Colonic mucosa (tissue), 4 donors: ENCODE measurements at regions of chr7 and their contacts with region 1.

Region 1: GRCh38 chr7:47968847-47969774 is 10.3 kb downstream of the HUS1 start:
- DNase-seq: peak; percentile 78
- H3K4me3 ChIP-seq: no peak overlapping the region
- H3K27ac ChIP-seq: peak overlapping the region; percentile 78
- H3K4me1 ChIP-seq: peaks cover 4% of the 10 kb centered on the region
- H3K27me3 ChIP-seq: no peaks in the 10 kb centered on the region
- CTCF ChIP-seq: peak; percentile 81

Region 2: DNA sequence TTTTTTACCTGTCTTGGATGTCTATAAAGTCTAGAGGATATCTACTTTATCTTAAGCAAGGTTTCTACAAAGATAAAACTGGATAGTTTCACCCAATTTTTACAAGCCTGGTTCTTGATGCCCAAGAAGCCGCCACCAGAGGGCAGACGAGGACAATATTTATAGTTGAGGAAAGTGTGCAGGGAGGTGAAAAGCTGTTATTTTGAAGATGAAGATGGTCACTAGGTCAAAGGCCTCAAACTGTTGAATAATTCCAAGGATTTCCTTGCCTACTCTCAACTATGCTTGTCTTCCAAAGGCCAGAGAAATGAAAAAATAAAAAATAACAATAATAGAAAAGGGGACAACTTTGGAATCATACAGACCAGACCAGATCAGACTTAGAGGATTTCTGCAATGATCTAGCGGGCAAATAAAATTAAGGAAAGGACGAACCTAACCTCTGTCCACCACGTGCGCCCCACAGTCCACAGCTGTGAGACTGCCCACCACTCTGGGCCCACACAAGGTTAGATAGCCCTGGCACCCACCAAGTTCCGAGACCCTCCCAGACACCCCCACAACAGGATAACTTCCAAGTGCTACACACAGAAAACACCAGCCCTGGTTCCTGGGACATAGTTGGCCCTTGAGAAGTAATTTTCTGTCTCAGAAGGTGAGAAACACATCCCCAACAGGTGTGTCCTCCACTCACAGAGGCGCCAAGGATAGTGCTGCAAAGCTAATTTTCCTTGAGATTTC is 23.7 kb before region 1 on chr7:
- intact Hi-C with region 1: loop called (anchors 2 kb)
- DNase-seq: peak; percentile 90
- H3K4me3 ChIP-seq: no peak overlapping the region
- H3K27ac ChIP-seq: no peak overlapping the region
- H3K4me1 ChIP-seq: peaks cover 7% of the 10 kb centered on the region
- H3K27me3 ChIP-seq: no peaks in the 10 kb centered on the region
- CTCF ChIP-seq: peak; percentile 75